CD8-positive, alpha-beta T cell (primary cell): ENCODE measurements at regions of chr4 and their contacts with region 1.

Region 1: GRCh38 chr4:39181905-39182638 is at the start of gene WDR19:
- DNase-seq: peak; percentile 97 to 100 (median 98)
- ATAC-seq: peak; percentile 93
- H3K4me3 ChIP-seq: peak within 1 kb of the TSS; percentile 82 to 92
- H3K4me3 Mint-ChIP-seq: peak within 1 kb of the TSS; percentile 43
- H3K27ac ChIP-seq: peak within 1 kb of the TSS; percentile 56 to 63
- H3K27ac Mint-ChIP-seq: no peak within 1 kb of the TSS
- H3K4me1 ChIP-seq: peaks cover 10% of the 10 kb centered on the region
- H3K4me1 Mint-ChIP-seq: peaks cover 6% of the 10 kb centered on the region
- H3K27me3 ChIP-seq: peaks cover 0 to 2% of the 10 kb centered on the region in 2 experiments
- H3K27me3 Mint-ChIP-seq: peaks cover 4% of the 10 kb centered on the region
- CTCF ChIP-seq: peak; percentile 64
- total RNA-seq, gene WDR19: 10.8 to 11.9 TPM

Region 2: GRCh38 chr4:37826295-37827029 is 1355.6 kb before region 1 on chr4 and contains the start of gene PGM2:
- CTCF ChIA-PET with region 1: no interaction called
- POLR2A ChIA-PET with region 1: no interaction called
- intact Hi-C with region 1: loop called (anchors 1 to 5 kb)
- DNase-seq: peak; percentile 81 to 93 (median 89)
- ATAC-seq: peak; percentile 98
- H3K4me3 ChIP-seq: peak within 1 kb of the TSS; percentile 96 to 99
- H3K4me3 Mint-ChIP-seq: peak within 1 kb of the TSS; percentile 97
- H3K27ac ChIP-seq: peak within 1 kb of the TSS; percentile 76 to 79
- H3K27ac Mint-ChIP-seq: peak within 1 kb of the TSS; percentile 92
- H3K4me1 ChIP-seq: peaks cover 23% of the 10 kb centered on the region
- H3K4me1 Mint-ChIP-seq: peaks cover 53% of the 10 kb centered on the region
- H3K27me3 ChIP-seq: no peaks in the 10 kb centered on the region
- H3K27me3 Mint-ChIP-seq: no peaks in the 10 kb centered on the region
- CTCF ChIP-seq: no peak
- total RNA-seq, gene PGM2: 14.5 to 15.4 TPM

Region 3: GRCh38 chr4:38804654-38805295 is 377.3 kb before region 1 on chr4 and contains the start of gene TLR1:
- CTCF ChIA-PET with region 1: no interaction called
- POLR2A ChIA-PET with region 1: interaction called, 3 read pairs
- intact Hi-C with region 1: loop called in 1 of 2 experiments (anchors 1 kb)
- DNase-seq: peak in 2 of 9 experiments; percentile 67 to 78
- ATAC-seq: peak; percentile 89
- H3K4me3 ChIP-seq: peak within 1 kb of the TSS; percentile 44 to 49
- H3K4me3 Mint-ChIP-seq: peak within 1 kb of the TSS; percentile 84
- H3K27ac ChIP-seq: peak within 1 kb of the TSS; percentile 48 to 63
- H3K27ac Mint-ChIP-seq: peak within 1 kb of the TSS; percentile 88
- H3K4me1 ChIP-seq: peaks cover 30% of the 10 kb centered on the region
- H3K4me1 Mint-ChIP-seq: peaks cover 38% of the 10 kb centered on the region
- H3K27me3 ChIP-seq: no peaks in the 10 kb centered on the region
- H3K27me3 Mint-ChIP-seq: no peaks in the 10 kb centered on the region
- CTCF ChIP-seq: peak; percentile 71
- total RNA-seq, gene TLR1: 10.1 to 13.4 TPM

Region 4: DNA sequence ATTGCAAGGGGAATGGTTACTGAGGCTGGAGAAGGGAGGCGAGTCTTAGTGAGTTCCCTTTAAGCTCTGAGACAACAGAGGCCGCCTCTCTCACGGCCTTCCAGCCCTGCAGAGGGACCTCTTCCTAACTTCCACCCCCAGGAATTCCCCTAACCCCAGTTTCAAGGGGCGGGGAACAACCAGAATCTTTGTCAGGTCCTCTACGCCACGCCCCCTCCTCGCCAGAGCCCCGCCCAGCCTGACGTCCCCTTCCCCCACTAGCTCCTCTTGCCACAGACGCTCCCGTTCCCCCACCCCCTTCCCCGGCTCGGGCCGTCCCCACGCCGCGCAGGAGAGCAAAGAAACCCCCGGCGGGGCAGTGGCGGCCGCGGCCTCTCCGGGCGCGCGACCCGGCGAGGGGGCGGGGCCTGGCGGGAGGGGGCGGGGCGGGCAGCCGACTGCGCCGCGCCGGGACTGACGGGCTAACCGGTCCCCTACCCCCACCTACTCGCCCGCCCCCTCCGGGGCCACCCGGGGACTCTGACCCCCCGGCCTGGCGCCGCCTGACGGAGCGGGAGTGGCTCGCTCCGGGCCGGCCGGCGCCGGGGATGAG is 137.6 kb before region 1 on chr4:
- CTCF ChIA-PET with region 1: no interaction called
- POLR2A ChIA-PET with region 1: no interaction called
- intact Hi-C with region 1: loop called (anchors 1 to 5 kb)
- DNase-seq: peak; percentile 85 to 99 (median 93)
- ATAC-seq: peak; percentile 83
- H3K4me3 ChIP-seq: peak overlapping the region; percentile 60 to 66
- H3K4me3 Mint-ChIP-seq: peak overlapping the region; percentile 92
- H3K27ac ChIP-seq: peak overlapping the region; percentile 59 to 89
- H3K27ac Mint-ChIP-seq: peak overlapping the region; percentile 96
- H3K4me1 ChIP-seq: peaks cover 21% of the 10 kb centered on the region
- H3K4me1 Mint-ChIP-seq: peaks cover 53% of the 10 kb centered on the region
- H3K27me3 ChIP-seq: no peaks in the 10 kb centered on the region
- H3K27me3 Mint-ChIP-seq: no peaks in the 10 kb centered on the region
- CTCF ChIP-seq: no peak

Region 5: DNA sequence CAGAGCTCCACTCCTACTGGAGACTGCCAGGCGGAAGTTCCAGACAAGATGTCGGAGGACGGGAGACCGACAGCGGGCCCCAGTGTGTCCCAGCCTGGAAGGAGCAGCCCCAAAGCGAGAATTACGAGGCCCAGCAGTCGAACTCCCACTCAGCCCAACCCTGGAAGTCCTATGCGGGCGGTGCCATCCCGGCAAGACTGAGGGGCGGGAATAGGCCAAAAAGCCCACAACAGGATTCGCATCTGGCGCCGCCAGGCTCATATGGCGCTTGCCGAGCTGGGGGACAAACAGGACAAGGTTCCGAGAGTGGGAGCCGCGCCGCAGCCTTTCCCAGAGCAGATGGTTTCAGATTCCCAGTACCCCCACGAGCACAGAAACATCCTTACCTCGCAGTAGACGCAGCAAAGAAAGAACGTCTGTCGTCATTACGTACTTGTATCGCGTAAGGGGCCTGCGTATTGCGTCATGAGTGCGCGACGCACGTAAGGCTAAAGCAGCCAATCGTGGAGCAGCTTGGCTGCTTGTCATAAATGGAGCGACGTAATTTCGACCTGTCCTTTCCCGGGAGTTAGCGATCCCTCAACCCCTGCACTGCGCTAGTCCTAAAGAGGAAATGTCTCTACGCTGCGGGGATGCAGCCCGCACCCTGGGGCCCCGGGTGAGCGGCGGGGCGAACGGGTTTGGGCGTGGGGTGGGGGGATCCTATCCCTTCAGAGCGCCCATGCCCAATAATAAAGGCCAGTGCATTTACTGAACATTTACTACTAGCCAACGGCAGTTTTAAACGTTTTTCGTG is 276.6 kb after region 1 on chr4 and contains the starts of genes LIAS and RPL9:
- CTCF ChIA-PET with region 1: no interaction called
- POLR2A ChIA-PET with region 1: no interaction called
- intact Hi-C with region 1: loop called (anchors 1 to 5 kb)
- DNase-seq: peak; percentile 83 to 99 (median 94)
- ATAC-seq: peak; percentile 81
- H3K4me3 ChIP-seq: peak within 1 kb of the TSS; percentile 87 to 90
- H3K4me3 Mint-ChIP-seq: peak within 1 kb of the TSS; percentile 98
- H3K27ac ChIP-seq: peak within 1 kb of the TSS; percentile 91 to 97
- H3K27ac Mint-ChIP-seq: peak within 1 kb of the TSS; percentile 100
- H3K4me1 ChIP-seq: peaks cover 25% of the 10 kb centered on the region
- H3K4me1 Mint-ChIP-seq: peaks cover 42% of the 10 kb centered on the region
- H3K27me3 ChIP-seq: no peaks in the 10 kb centered on the region
- H3K27me3 Mint-ChIP-seq: no peaks in the 10 kb centered on the region
- CTCF ChIP-seq: no peak
- total RNA-seq, gene LIAS: 9.5 to 11.0 TPM
- total RNA-seq, gene RPL9: 2,977 to 3,433 TPM

Region 6: GRCh38 chr4:39697740-39698423 is 515.8 kb after region 1 on chr4 and contains the start of gene UBE2K:
- CTCF ChIA-PET with region 1: no interaction called
- POLR2A ChIA-PET with region 1: no interaction called
- intact Hi-C with region 1: loop called (anchors 2 to 10 kb)
- DNase-seq: peak; percentile 73 to 95 (median 87)
- ATAC-seq: peak; percentile 82
- H3K4me3 ChIP-seq: peak within 1 kb of the TSS; percentile 97 to 100
- H3K4me3 Mint-ChIP-seq: peak within 1 kb of the TSS; percentile 99
- H3K27ac ChIP-seq: peak within 1 kb of the TSS; percentile 85 to 95
- H3K27ac Mint-ChIP-seq: peak within 1 kb of the TSS; percentile 99
- H3K4me1 ChIP-seq: peaks cover 39% of the 10 kb centered on the region
- H3K4me1 Mint-ChIP-seq: peaks cover 44% of the 10 kb centered on the region
- H3K27me3 ChIP-seq: no peaks in the 10 kb centered on the region
- H3K27me3 Mint-ChIP-seq: no peaks in the 10 kb centered on the region
- CTCF ChIP-seq: no peak
- total RNA-seq, gene UBE2K: 33.1 to 35.8 TPM

Region 7: GRCh38 chr4:39883646-39884045 is 701.6 kb after region 1 on chr4:
- CTCF ChIA-PET with region 1: no interaction called
- POLR2A ChIA-PET with region 1: no interaction called
- intact Hi-C with region 1: no loop called
- DNase-seq: no peak
- ATAC-seq: no peak
- H3K4me3 ChIP-seq: no peak overlapping the region
- H3K4me3 Mint-ChIP-seq: no peak overlapping the region
- H3K27ac ChIP-seq: no peak overlapping the region
- H3K27ac Mint-ChIP-seq: no peak overlapping the region
- H3K4me1 ChIP-seq: no peaks in the 10 kb centered on the region
- H3K4me1 Mint-ChIP-seq: peaks cover 7% of the 10 kb centered on the region
- H3K27me3 ChIP-seq: no peaks in the 10 kb centered on the region
- H3K27me3 Mint-ChIP-seq: no peaks in the 10 kb centered on the region
- CTCF ChIP-seq: no peak